MCF 10A (cell line): ENCODE measurements at regions of chr11 and their contacts with region 1.

Region 1: GRCh38 chr11:129364143-129364654 is 11.4 kb upstream of the BARX2 start:
- DNase-seq: peak; percentile 89
- H3K4me3 Mint-ChIP-seq: no peak overlapping the region
- H3K27ac Mint-ChIP-seq: no peak overlapping the region
- H3K4me1 Mint-ChIP-seq: peaks cover 6% of the 10 kb centered on the region
- H3K27me3 Mint-ChIP-seq: peaks cover 61% of the 10 kb centered on the region
- CTCF ChIP-seq: peak; percentile 100

Region 2: DNA sequence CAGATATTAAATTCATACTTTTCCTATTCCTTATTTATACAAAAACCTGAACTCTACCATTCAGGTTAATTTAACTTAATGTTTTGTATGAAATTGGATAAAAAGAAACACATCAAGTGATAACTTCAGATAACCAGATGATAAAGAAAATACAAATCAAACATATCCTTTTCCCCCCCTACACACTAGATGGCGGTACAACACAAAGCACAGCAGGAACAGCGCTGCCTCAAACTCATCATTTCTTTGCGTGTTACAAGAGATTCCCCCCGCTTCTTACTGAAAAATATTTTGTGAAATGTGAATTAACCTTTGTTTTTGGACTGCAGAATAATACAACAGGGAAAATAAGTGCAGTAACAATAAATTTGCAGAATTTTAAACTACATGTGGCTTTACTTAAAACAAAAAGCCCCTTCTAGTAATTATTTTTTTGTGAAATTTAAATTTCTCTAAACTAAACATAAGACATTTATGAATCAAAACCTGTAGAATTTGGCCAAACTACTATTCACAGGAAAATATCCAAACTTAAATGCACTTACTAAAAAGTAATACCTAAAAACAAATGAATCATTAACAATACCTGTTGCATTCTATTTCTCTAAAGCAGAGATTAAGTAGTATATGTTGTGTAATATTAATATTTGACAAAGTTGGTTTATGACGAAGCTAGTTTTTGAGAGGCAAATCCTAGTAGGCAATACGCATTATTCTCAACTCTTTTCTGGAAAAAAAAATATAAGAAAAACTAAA is 246.4 kb before region 1 on chr11:
- CTCF ChIA-PET with region 1: interaction called, 3 read pairs
- POLR2A ChIA-PET with region 1: no interaction called
- intact Hi-C with region 1: loop called (anchors 1 kb)
- DNase-seq: peak; percentile 79
- H3K4me3 Mint-ChIP-seq: no peak overlapping the region
- H3K27ac Mint-ChIP-seq: no peak overlapping the region
- H3K4me1 Mint-ChIP-seq: peaks cover 33% of the 10 kb centered on the region
- H3K27me3 Mint-ChIP-seq: no peaks in the 10 kb centered on the region
- CTCF ChIP-seq: peak; percentile 84

Region 3: DNA sequence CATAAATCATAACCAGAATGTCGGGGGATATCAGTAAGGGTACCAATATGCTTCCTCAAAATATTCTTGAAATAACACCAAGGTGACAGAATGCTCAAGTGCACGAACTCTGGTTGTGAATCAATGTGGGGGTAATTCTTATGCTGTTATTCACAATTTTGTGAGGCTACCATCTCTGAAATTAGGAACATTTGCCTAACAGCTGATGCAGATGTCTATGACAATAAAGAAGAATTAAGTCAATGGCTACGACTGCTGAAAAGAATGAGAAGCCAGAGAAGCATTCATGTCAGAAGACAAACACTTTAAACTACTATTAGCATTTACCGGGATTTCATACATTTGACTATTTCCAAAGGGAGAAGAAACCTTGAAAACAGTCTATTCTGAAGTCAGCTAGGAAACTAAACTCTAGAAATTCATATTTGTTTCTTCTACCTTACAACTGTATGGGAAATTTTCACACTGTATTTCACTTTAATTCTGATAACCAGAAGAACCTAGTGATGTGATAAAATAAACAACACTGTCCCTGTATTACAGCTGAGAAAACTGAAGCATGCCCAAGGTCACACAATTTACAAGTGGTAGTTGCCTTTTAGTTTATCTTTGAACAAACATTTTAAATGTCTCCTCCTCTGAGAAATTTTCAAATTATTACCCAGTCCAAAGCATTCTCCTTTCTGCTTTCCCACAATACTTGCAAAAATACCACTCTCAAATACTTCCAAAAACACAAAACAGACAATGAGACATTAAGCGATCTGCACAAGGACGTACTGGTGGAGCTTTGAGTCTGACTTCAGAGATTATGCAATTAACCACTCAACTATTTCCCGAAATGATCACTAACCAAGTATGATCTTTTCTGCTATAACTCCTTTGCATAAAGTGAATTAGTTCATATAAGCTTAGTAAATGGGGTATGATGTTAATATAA is 154.0 kb before region 1 on chr11:
- CTCF ChIA-PET with region 1: no interaction called
- POLR2A ChIA-PET with region 1: no interaction called
- intact Hi-C with region 1: no loop called
- DNase-seq: no peak
- H3K4me3 Mint-ChIP-seq: no peak overlapping the region
- H3K27ac Mint-ChIP-seq: peak overlapping the region; percentile 19
- H3K4me1 Mint-ChIP-seq: peaks cover 22% of the 10 kb centered on the region
- H3K27me3 Mint-ChIP-seq: no peaks in the 10 kb centered on the region
- CTCF ChIP-seq: no peak

Region 4: DNA sequence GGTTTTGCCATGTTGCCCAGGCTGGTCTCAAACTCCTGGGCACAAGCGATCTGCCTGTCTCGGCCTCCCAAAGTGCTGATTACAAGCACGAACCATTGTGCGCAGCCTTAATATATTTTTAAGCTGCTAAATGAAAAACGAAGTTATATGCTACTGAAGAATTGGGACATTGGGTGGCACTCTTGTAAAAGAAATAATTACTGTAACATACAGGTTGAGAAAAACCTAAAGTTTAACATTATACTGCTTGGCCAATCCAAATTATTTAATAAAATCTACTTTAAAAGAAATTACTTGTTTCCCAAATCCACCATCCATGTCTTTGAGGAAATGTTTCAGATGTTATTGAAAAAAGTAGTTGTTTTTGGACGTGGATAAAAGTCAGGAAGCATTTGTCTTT is 134.2 kb before region 1 on chr11:
- CTCF ChIA-PET with region 1: no interaction called
- POLR2A ChIA-PET with region 1: no interaction called
- intact Hi-C with region 1: loop called (anchors 1 kb)
- DNase-seq: no peak
- H3K4me3 Mint-ChIP-seq: no peak overlapping the region
- H3K27ac Mint-ChIP-seq: no peak overlapping the region
- H3K4me1 Mint-ChIP-seq: peaks cover 5% of the 10 kb centered on the region
- H3K27me3 Mint-ChIP-seq: no peaks in the 10 kb centered on the region
- CTCF ChIP-seq: peak; percentile 20

Region 5: GRCh38 chr11:129295746-129296145 is 68.5 kb before region 1 on chr11:
- CTCF ChIA-PET with region 1: no interaction called
- POLR2A ChIA-PET with region 1: no interaction called
- intact Hi-C with region 1: no loop called
- DNase-seq: no peak
- H3K4me3 Mint-ChIP-seq: no peak overlapping the region
- H3K27ac Mint-ChIP-seq: no peak overlapping the region
- H3K4me1 Mint-ChIP-seq: no peaks in the 10 kb centered on the region
- H3K27me3 Mint-ChIP-seq: peaks cover 15% of the 10 kb centered on the region
- CTCF ChIP-seq: no peak

Region 6: DNA sequence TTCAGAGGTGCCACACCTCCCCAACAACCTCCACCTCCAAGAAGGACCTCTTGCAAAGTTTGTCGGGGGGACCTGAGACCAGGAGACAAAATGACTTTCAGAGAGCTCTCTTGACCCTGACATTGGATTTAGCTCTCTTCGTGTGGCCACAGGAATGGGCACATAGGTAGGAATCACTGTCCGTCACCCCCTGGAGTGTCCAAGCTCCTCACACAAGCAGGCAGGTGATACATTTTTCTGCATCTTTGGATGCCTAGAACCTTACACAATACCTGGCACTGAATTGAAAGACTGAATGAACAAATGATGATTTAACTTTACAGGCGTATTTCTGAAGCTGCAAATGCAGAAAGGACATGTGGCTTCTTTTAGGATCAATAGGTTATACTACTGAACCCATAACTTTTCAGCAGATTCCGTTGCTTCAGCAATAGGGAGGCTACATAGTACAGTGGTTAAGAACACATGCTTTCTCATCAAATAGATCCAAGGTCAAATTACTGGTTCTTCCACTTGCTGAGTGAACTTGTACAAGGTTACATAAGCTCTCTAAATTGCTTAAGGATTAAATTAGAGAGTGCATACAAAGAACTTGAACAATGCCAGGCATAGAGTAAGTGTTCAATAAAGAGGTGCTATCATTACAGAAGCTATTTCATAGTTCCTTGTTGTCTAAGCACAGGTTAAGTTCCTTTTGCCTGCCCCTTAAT is 140.9 kb after region 1 on chr11:
- CTCF ChIA-PET with region 1: no interaction called
- POLR2A ChIA-PET with region 1: no interaction called
- intact Hi-C with region 1: no loop called
- DNase-seq: no peak
- H3K4me3 Mint-ChIP-seq: no peak overlapping the region
- H3K27ac Mint-ChIP-seq: no peak overlapping the region
- H3K4me1 Mint-ChIP-seq: no peaks in the 10 kb centered on the region
- H3K27me3 Mint-ChIP-seq: peaks cover 21% of the 10 kb centered on the region
- CTCF ChIP-seq: no peak

Region 7: GRCh38 chr11:129695575-129696308 is 331.5 kb after region 1 on chr11:
- CTCF ChIA-PET with region 1: interaction called, 3 read pairs
- POLR2A ChIA-PET with region 1: no interaction called
- intact Hi-C with region 1: loop called (anchors 5 kb)
- DNase-seq: peak; percentile 62
- H3K4me3 Mint-ChIP-seq: no peak overlapping the region
- H3K27ac Mint-ChIP-seq: no peak overlapping the region
- H3K4me1 Mint-ChIP-seq: no peaks in the 10 kb centered on the region
- H3K27me3 Mint-ChIP-seq: peaks cover 60% of the 10 kb centered on the region
- CTCF ChIP-seq: peak; percentile 84